ENCODE measurements at regions of chr11 and their contacts with region 1.

Region 1: DNA sequence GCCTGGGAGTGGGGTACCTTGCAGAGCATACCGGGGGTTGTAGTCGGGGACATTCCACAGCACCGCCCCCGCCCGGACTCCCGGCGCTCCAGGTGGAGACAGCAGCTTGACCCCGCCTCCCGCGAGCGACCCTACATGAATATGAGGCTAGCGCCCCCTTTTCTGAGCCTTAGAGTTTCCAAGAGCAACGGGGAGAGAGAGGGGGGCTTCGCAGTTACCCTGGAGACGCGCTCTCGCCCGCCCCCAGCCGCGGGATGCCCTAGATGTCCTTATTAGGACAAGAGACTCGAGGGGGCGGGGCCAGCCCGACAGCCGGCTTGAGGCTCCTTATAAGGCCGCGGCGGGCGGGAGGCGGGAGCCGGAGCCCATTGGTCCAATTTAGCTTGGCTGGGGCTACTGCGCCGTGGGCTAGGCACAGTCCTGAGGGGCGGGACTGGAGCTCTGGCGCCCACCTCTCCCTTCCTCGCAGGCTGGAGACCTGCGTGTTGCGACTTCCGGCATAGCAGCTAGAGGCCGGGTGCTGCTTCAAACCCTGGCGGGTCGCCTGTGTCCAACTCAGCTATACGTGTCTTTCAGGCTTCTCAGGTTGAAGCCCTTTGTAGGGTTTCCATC is 927 bp upstream of the MUS81 start:
- DNase-seq: peak; percentile 97
- H3K4me3 Mint-ChIP-seq: peak overlapping the region; percentile 96
- H3K27ac Mint-ChIP-seq: peak overlapping the region; percentile 99
- H3K4me1 Mint-ChIP-seq: peaks cover 49% of the 10 kb centered on the region
- H3K27me3 Mint-ChIP-seq: no peaks in the 10 kb centered on the region

Region 2: GRCh38 chr11:64742889-64743590 is 1116.3 kb before region 1 on chr11:
- intact Hi-C with region 1: no loop called
- DNase-seq: peak; percentile 74
- H3K4me3 Mint-ChIP-seq: no peak overlapping the region
- H3K27ac Mint-ChIP-seq: no peak overlapping the region
- H3K4me1 Mint-ChIP-seq: peaks cover 27% of the 10 kb centered on the region
- H3K27me3 Mint-ChIP-seq: no peaks in the 10 kb centered on the region

Region 3: GRCh38 chr11:64778508-64779346 is 1080.6 kb before region 1 on chr11 and contains the start of gene SF1:
- intact Hi-C with region 1: loop called (anchors 2 kb)
- DNase-seq: peak; percentile 99
- H3K4me3 Mint-ChIP-seq: peak within 1 kb of the TSS; percentile 87
- H3K27ac Mint-ChIP-seq: peak within 1 kb of the TSS; percentile 97
- H3K4me1 Mint-ChIP-seq: peaks cover 57% of the 10 kb centered on the region
- H3K27me3 Mint-ChIP-seq: peaks cover 2% of the 10 kb centered on the region
- total RNA-seq, gene SF1: 518 and 538 TPM in 2 replicates

Region 4: DNA sequence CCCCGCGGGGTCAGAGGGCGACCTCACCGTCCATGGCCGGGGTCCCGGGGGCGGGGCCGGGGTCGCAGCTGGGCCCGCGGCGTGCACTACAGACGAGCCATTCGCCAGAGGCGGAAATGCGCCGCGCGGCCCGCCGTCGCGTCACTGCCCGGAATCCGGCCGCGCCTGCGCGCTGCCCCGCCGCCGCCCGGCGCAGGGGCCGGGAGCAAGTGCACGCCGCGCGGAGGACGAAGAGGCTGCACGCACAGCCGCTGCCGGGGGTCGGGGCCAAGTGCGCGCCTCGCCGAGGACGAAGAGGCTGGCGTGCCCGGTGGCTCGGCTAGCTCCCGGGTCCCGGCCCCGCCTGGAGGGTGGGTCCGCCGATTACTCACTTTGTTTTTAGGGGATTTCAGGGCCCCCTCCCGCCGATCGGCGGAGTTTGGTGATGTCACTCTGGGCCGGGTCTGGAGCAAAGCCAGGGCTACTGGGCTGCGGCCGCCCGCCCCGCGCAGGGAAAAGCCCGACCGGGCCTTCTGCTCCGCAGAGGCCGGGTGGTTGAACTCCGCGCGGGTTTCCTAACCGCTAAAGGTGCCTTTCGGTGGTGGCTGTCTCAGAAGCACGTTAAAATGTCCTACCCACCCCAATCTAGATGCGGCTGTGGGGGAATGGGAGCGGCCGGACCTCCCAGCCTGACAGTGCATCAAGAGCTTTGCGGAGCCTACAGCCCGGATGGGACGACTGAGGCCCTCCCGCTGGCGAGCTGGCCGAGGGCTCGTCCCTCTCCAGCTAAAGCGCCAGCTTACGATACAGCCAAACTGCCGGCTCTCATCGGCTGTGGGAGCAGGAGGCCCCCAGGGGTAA is 196.3 kb before region 1 on chr11 and contains the start of gene RELA:
- intact Hi-C with region 1: loop called (anchors 1 kb)
- DNase-seq: peak; percentile 89
- H3K4me3 Mint-ChIP-seq: peak within 1 kb of the TSS; percentile 89
- H3K27ac Mint-ChIP-seq: peak within 1 kb of the TSS; percentile 93
- H3K4me1 Mint-ChIP-seq: peaks cover 30% of the 10 kb centered on the region
- H3K27me3 Mint-ChIP-seq: no peaks in the 10 kb centered on the region
- total RNA-seq, gene RELA: 102 and 104 TPM in 2 replicates

Region 5: GRCh38 chr11:65817835-65818742 is 41.2 kb before region 1 on chr11:
- intact Hi-C with region 1: loop called (anchors 1 kb)
- DNase-seq: peak; percentile 90
- H3K4me3 Mint-ChIP-seq: peak overlapping the region; percentile 82
- H3K27ac Mint-ChIP-seq: peak overlapping the region; percentile 82
- H3K4me1 Mint-ChIP-seq: peaks cover 19% of the 10 kb centered on the region
- H3K27me3 Mint-ChIP-seq: peaks cover 9% of the 10 kb centered on the region

Region 6: GRCh38 chr11:65900125-65900898 is 41.0 kb after region 1 on chr11 and contains the start of gene FOSL1:
- intact Hi-C with region 1: loop called (anchors 1 kb)
- DNase-seq: peak; percentile 89
- H3K4me3 Mint-ChIP-seq: peak within 1 kb of the TSS; percentile 82
- H3K27ac Mint-ChIP-seq: peak within 1 kb of the TSS; percentile 67
- H3K4me1 Mint-ChIP-seq: peaks cover 23% of the 10 kb centered on the region
- H3K27me3 Mint-ChIP-seq: peaks cover 9% of the 10 kb centered on the region
- total RNA-seq, gene FOSL1: 31.7 and 33.5 TPM in 2 replicates

Region 7: GRCh38 chr11:66001942-66002647 is 142.8 kb after region 1 on chr11 and contains the starts of genes BANF1 and EIF1AD:
- intact Hi-C with region 1: loop called (anchors 1 kb)
- DNase-seq: peak; percentile 93
- H3K4me3 Mint-ChIP-seq: peak within 1 kb of the TSS; percentile 99
- H3K27ac Mint-ChIP-seq: peak within 1 kb of the TSS; percentile 99
- H3K4me1 Mint-ChIP-seq: peaks cover 26% of the 10 kb centered on the region
- H3K27me3 Mint-ChIP-seq: no peaks in the 10 kb centered on the region
- total RNA-seq, gene BANF1: 282 and 284 TPM in 2 replicates
- total RNA-seq, gene EIF1AD: 69.0 and 70.7 TPM in 2 replicates

Region 8: GRCh38 chr11:66344550-66345315 is 485.4 kb after region 1 on chr11 and contains the start of gene BRMS1:
- intact Hi-C with region 1: loop called (anchors 10 kb)
- DNase-seq: peak; percentile 94
- H3K4me3 Mint-ChIP-seq: peak within 1 kb of the TSS; percentile 97
- H3K27ac Mint-ChIP-seq: peak within 1 kb of the TSS; percentile 95
- H3K4me1 Mint-ChIP-seq: peaks cover 46% of the 10 kb centered on the region
- H3K27me3 Mint-ChIP-seq: peaks cover 2% of the 10 kb centered on the region
- total RNA-seq, gene BRMS1: 63.1 and 67.1 TPM in 2 replicates

Measured in activated T-helper 1 cell treated with anti-CD3 and anti-CD28 coated beads, Interleukin-12 subunit alpha, Interleukin-12 subunit beta, Interleukin-2, Interleukin-4 antibody, amounts not matched to agents 30 ng/mL and 10 ng/mL and 1 ng/mL, durations not matched to agents 14 hours and 24 hours and 36 hours (primary cell).